Ascending aorta (tissue), 2 donors: ENCODE measurements at regions of chr6 and their contacts with region 1.

Region 1: DNA sequence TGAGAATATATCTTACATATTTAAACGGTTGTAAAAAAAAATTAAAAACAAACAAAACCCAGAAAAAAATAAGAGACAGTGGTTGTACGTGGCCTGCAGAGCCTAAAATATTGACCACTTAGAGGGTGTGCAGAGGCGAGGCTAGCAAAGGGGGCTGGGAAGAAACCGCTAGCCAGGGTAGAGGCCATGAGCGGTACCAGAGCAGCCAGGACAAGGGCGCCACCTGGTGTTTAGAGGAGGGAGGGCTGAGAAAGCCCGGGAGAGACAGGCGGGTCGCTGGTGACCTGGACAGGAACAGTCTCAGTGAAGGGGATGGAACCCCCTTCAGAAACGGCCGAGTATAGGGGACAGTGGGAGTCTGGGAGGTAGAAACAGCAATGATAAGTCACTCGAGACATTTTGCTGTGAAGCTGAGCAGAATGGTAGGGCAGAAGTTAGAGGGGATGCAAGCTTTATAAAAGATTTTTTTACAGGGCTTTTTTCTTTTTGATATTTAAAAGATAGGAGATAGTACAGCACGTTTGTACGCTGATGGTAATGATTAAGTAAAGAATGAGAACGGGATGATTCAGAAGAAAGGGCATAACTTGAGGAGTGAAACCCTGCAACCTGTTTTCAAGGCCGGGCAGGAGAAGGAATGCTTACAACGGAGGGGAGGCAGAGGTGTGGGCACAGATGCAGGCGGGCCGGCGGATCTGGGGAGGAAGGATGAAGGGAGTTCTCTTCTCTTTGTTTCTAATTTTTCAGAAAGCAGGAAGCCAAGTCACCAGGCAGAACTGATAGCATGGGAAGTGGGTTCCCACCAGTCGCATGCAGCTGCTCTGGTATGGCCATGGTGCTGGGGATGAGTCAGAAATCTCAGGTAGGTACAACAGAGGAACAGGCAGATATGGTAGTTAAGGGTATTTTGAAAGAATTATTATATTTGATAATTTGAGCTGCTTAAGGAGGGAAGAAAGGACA is 76.2 kb downstream of the FAM229B start:
- DNase-seq: peak in 1 of 2 donors; percentile 77
- H3K4me3 ChIP-seq: no peak overlapping the region
- H3K27ac ChIP-seq: no peak overlapping the region
- H3K4me1 ChIP-seq: no peaks in the 10 kb centered on the region
- H3K27me3 ChIP-seq: no peaks in the 10 kb centered on the region
- CTCF ChIP-seq: peak in 2 of 3 experiments; percentile 42 to 58

Region 2: DNA sequence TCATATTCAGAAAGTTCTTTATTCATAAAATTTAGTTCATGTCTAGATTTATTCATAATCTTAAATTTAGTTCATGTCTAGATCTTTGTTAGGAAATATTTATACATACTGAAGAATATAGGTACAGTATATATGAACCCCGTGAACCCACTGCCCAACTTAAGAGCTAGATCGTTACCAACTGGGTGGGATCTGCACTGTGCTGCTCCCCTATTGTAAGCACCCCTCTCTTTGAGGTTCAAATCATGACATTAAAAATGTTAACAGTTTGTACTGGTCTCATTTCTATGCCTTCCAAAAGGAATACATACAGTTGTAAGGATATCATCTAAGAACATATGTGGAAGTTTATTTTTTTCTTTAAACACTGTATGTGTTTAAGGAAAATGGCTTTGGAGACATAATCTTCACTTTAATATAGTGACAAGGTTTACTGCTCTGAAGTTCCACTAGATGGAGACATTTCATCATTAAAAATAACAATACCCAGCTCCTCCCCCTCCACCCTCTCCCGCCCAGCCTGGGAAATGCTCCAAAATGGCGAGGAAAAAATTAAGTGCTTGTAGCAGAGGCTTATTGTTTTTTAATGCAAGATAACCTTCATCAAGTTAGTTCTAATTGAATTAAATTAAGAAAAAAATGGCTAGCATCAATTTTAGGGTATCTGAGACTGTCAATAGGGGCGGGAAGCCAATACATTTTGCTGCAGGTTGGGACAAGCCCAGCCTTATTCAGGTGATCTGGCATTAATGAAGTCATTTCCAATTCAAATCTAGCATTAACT is 453.8 kb before region 1 on chr6:
- intact Hi-C with region 1: loop called (anchors 10 kb)
- DNase-seq: peak in 1 of 2 donors; percentile 78
- H3K4me3 ChIP-seq: peak overlapping the region in 1 of 2 donors; percentile 46
- H3K27ac ChIP-seq: no peak overlapping the region
- H3K4me1 ChIP-seq: peaks cover 0 to 6% of the 10 kb centered on the region in 2 donors
- H3K27me3 ChIP-seq: no peaks in the 10 kb centered on the region
- CTCF ChIP-seq: peak; percentile 58 to 79 (median 77)